H1 (cell line): ENCODE measurements at regions of chr9 and their contacts with region 1.

Region 1: GRCh38 chr9:109251080-109251775 is 69.6 kb downstream of the EPB41L4B start:
- DNase-seq: peak in 1 of 2 experiments; percentile 28
- H3K4me3 ChIP-seq: no peak overlapping the region
- H3K27ac ChIP-seq: no peak overlapping the region
- H3K4me1 ChIP-seq: peaks cover 0 to 4% (median 3%) of the 10 kb centered on the region in 4 experiments; a peak in 2 of 7 replicates
- H3K27me3 ChIP-seq: no peaks in the 10 kb centered on the region
- CTCF ChIP-seq: no peak
- EP300 ChIP-seq: no peak
- POLR2A ChIP-seq: no peak
- RAD21 ChIP-seq: no peak

Region 2: DNA sequence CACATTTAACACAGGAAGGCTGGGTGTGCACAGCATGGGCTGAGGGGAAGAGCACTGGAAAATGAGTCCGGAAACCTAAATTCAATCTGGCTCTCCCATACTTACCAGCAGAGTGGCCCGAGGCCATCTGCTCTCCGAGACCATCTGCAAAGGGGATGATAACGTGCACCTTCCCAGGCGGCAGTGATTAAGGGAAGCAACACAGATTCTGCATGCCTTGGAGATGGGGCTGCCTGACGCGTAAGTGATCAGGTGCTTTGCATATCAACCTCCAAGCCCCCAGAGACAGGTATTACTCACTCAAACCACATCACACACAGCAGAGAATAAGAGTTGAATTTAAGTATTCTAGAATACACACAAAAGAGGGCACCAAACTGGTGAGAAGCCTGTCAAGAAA is 60.5 kb after region 1 on chr9:
- CTCF ChIA-PET with region 1: interaction called, 96 read pairs
- POLR2A ChIA-PET with region 1: no interaction called
- DNase-seq: no peak
- H3K4me3 ChIP-seq: no peak overlapping the region
- H3K27ac ChIP-seq: no peak overlapping the region
- H3K4me1 ChIP-seq: peaks cover 14 to 36% (median 25%) of the 10 kb centered on the region in 4 experiments
- H3K27me3 ChIP-seq: no peaks in the 10 kb centered on the region
- CTCF ChIP-seq: no peak
- EP300 ChIP-seq: no peak
- POLR2A ChIP-seq: no peak
- RAD21 ChIP-seq: no peak